ENCODE measurements at regions of chr10 and their contacts with region 1.

Region 1: DNA sequence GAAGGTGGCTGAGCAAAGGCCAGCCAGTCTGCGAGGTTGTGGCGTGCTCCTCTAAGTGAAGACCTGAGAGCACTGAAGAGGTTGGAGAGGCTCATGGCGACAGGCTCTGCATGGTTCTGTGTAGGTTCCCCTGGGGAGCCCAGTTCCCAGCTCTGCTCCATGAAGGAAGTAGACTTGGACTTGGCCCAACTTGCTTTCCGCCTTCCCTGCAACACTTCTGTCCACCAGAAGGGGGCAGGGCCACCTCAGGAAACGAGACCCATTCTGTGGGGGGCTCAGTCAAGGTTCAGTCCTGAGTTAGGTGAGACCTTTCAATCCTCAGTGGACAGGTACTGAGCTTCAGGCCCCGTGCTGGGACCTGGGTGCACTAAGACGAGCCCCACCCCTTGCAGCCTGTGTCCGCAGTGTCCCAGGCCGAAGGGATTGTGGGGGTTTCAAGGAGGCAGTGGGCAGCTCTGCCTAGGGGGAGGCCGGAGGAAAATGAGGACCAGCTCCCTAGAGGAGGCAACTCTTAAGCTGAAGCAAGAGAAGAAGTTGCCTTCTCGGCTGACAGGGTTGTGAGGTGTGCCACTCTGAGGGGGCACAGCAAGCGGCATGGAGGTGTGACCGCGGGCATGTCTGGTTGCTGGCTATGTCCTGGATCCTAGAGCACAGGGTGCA is 15.0 kb upstream of the PCBD1 start:
- DNase-seq: peak; percentile 53
- H3K4me3 Mint-ChIP-seq: no peak overlapping the region
- H3K27ac Mint-ChIP-seq: no peak overlapping the region
- H3K4me1 Mint-ChIP-seq: no peaks in the 10 kb centered on the region
- H3K27me3 Mint-ChIP-seq: peaks cover 51% of the 10 kb centered on the region
- CTCF ChIP-seq: peak; percentile 81

Region 2: GRCh38 chr10:70308121-70309060 is 595.0 kb before region 1 on chr10:
- CTCF ChIA-PET with region 1: no interaction called
- POLR2A ChIA-PET with region 1: no interaction called
- intact Hi-C with region 1: no loop called
- DNase-seq: no peak
- H3K4me3 Mint-ChIP-seq: no peak overlapping the region
- H3K27ac Mint-ChIP-seq: no peak overlapping the region
- H3K4me1 Mint-ChIP-seq: no peaks in the 10 kb centered on the region
- H3K27me3 Mint-ChIP-seq: no peaks in the 10 kb centered on the region
- CTCF ChIP-seq: no peak

Region 3: DNA sequence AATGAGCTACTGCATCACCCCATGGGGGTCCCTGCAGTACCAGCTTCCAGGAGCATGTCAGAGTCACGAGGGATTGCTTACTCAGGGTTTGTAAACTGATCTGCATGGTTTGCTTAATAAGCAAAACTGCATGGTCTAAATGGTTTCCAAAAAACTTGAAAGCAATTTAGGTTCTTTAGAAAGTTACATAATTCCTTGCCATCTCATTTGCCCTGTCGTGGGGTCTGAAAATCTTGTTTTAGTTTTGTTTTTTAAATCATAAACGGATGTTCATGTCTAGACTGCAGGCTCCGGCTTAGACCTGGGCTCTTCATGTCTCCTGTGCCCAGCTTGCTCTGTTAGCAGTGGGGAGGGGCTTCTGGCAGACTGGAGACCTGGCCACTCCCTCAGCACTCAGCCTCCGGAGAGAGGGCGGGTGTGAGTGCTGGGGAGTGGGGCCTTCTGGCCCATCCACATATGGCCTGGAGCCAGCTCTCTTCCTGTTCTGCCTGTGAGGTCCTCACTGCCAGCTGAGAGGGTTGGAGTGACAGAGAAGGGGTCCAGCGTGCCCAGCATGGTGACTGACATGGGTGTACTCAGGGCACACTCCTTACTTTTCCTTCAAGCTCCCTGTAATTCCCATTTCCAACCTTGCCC is 318.4 kb before region 1 on chr10:
- CTCF ChIA-PET with region 1: no interaction called
- POLR2A ChIA-PET with region 1: no interaction called
- intact Hi-C with region 1: no loop called
- DNase-seq: no peak
- H3K4me3 Mint-ChIP-seq: no peak overlapping the region
- H3K27ac Mint-ChIP-seq: no peak overlapping the region
- H3K4me1 Mint-ChIP-seq: peaks cover 3% of the 10 kb centered on the region
- H3K27me3 Mint-ChIP-seq: peaks cover 33% of the 10 kb centered on the region
- CTCF ChIP-seq: no peak

Region 4: DNA sequence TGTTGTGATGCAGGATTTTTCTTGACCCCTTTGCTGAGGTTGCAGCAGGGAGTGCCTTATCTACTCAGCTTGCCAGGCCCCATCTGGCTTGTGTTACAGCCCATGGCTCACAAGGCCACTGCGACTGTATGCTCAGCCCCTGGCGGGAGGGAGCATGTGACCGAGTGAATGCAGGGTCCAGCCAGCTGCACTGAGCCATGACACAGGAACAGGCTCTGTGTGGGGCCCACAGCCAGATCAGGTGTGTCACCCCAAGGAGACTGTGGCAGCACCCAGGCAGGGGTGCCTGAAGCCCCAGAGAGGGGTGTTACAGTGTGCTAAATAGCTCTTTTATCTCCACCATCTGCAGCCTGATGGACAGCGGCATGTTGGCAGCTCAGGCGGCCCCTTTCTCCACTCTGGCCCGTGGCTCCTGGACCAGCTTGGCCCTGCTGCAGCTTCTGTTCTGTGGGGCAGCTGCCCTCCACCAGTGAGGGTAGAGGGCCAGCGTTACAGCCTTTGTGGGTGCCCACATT is 12.4 kb before region 1 on chr10:
- CTCF ChIA-PET with region 1: interaction called, 20 read pairs
- POLR2A ChIA-PET with region 1: no interaction called
- intact Hi-C with region 1: no loop called
- DNase-seq: no peak
- H3K4me3 Mint-ChIP-seq: no peak overlapping the region
- H3K27ac Mint-ChIP-seq: no peak overlapping the region
- H3K4me1 Mint-ChIP-seq: peaks cover 12% of the 10 kb centered on the region
- H3K27me3 Mint-ChIP-seq: no peaks in the 10 kb centered on the region
- CTCF ChIP-seq: no peak

Region 5: DNA sequence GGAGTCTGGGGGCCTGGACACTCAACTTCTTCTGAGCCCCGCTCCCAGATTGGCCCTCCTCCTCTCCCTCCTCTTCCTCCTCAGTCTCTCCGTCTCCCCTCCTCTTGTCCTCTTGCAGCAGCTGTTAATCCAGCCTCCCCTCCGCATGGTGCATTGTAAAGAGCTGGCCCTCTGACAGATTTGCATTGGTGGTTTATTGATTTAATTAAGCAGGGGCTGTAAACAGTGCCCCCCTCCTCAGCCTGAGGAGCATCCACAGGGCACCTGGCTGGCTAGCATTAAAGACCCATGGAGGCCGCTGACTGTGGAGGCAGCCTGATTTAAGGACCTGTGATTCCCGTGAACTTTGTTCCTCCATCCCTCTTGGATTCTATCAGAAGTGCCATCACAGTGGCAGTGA is 13.8 kb after region 1 on chr10:
- CTCF ChIA-PET with region 1: interaction called, 72 read pairs
- POLR2A ChIA-PET with region 1: no interaction called
- intact Hi-C with region 1: no loop called
- DNase-seq: no peak
- H3K4me3 Mint-ChIP-seq: no peak overlapping the region
- H3K27ac Mint-ChIP-seq: no peak overlapping the region
- H3K4me1 Mint-ChIP-seq: no peaks in the 10 kb centered on the region
- H3K27me3 Mint-ChIP-seq: peaks cover 89% of the 10 kb centered on the region
- CTCF ChIP-seq: no peak

Region 6: DNA sequence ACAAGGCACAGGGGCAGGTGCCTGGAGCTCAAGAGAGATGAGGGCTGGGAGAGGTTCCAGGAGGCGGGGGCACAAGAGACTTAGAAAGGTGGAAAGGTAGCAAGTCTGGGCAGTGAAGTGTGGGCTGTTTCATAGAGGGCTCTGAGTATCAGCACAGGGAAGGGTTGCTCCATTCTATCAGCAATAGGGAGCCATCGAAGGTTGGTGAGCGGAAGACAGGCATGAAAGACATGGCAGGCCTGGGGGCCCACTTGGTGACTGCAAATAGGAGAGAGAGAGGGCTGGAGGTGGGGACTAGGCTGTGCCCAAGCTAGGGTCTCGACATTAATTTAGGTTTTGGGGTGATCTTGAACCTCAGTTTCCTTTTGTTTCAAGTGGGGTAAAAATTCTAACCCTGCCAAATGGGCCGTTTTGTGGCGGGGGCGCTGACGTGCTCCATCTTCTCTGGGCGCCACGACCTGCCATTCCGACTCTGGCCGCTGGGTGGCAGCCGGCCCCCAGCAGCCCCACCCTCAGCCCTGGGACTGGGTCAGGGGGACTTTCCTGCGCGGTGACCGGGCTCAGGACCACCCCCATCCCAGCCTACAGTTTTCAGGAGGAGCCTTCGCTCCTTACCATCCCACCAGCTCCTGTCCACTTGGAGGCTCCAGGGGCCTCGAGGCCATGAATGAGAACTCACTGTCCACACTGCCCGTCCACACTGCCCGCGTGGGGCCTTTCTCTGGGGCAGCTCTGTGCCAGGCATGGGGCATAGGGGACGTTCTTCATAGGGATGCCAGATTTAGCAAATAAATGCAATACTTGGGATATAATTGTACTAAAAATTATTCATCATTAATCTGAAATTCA is 22.2 kb after region 1 on chr10:
- CTCF ChIA-PET with region 1: interaction called, 72 read pairs
- POLR2A ChIA-PET with region 1: no interaction called
- intact Hi-C with region 1: no loop called
- DNase-seq: peak; percentile 36
- H3K4me3 Mint-ChIP-seq: no peak overlapping the region
- H3K27ac Mint-ChIP-seq: no peak overlapping the region
- H3K4me1 Mint-ChIP-seq: peaks cover 7% of the 10 kb centered on the region
- H3K27me3 Mint-ChIP-seq: peaks cover 37% of the 10 kb centered on the region
- CTCF ChIP-seq: peak; percentile 94

Region 7: GRCh38 chr10:71015674-71016073 is 112.3 kb after region 1 on chr10:
- CTCF ChIA-PET with region 1: no interaction called
- POLR2A ChIA-PET with region 1: no interaction called
- intact Hi-C with region 1: no loop called
- DNase-seq: no peak
- H3K4me3 Mint-ChIP-seq: no peak overlapping the region
- H3K27ac Mint-ChIP-seq: no peak overlapping the region
- H3K4me1 Mint-ChIP-seq: no peaks in the 10 kb centered on the region
- H3K27me3 Mint-ChIP-seq: peaks cover 69% of the 10 kb centered on the region
- CTCF ChIP-seq: no peak

Region 8: GRCh38 chr10:71103961-71104360 is 200.6 kb after region 1 on chr10:
- CTCF ChIA-PET with region 1: no interaction called
- POLR2A ChIA-PET with region 1: no interaction called
- intact Hi-C with region 1: no loop called
- DNase-seq: no peak
- H3K4me3 Mint-ChIP-seq: no peak overlapping the region
- H3K27ac Mint-ChIP-seq: no peak overlapping the region
- H3K4me1 Mint-ChIP-seq: no peaks in the 10 kb centered on the region
- H3K27me3 Mint-ChIP-seq: peaks cover 55% of the 10 kb centered on the region
- CTCF ChIP-seq: no peak

Region 9: GRCh38 chr10:71285180-71285545 is 381.8 kb after region 1 on chr10:
- CTCF ChIA-PET with region 1: interaction called, 22 read pairs
- POLR2A ChIA-PET with region 1: no interaction called
- intact Hi-C with region 1: no loop called
- DNase-seq: peak; percentile 55
- H3K4me3 Mint-ChIP-seq: no peak overlapping the region
- H3K27ac Mint-ChIP-seq: no peak overlapping the region
- H3K4me1 Mint-ChIP-seq: no peaks in the 10 kb centered on the region
- H3K27me3 Mint-ChIP-seq: no peaks in the 10 kb centered on the region
- CTCF ChIP-seq: peak; percentile 71

Region 10: GRCh38 chr10:71293446-71294084 is 390.2 kb after region 1 on chr10:
- CTCF ChIA-PET with region 1: interaction called, 15 read pairs
- POLR2A ChIA-PET with region 1: no interaction called
- intact Hi-C with region 1: no loop called
- DNase-seq: peak; percentile 32
- H3K4me3 Mint-ChIP-seq: no peak overlapping the region
- H3K27ac Mint-ChIP-seq: no peak overlapping the region
- H3K4me1 Mint-ChIP-seq: peaks cover 6% of the 10 kb centered on the region
- H3K27me3 Mint-ChIP-seq: no peaks in the 10 kb centered on the region
- CTCF ChIP-seq: no peak

Region 11: GRCh38 chr10:71302874-71303568 is 399.6 kb after region 1 on chr10:
- CTCF ChIA-PET with region 1: interaction called, 15 read pairs
- POLR2A ChIA-PET with region 1: no interaction called
- intact Hi-C with region 1: no loop called
- DNase-seq: peak; percentile 67
- H3K4me3 Mint-ChIP-seq: no peak overlapping the region
- H3K27ac Mint-ChIP-seq: no peak overlapping the region
- H3K4me1 Mint-ChIP-seq: no peaks in the 10 kb centered on the region
- H3K27me3 Mint-ChIP-seq: no peaks in the 10 kb centered on the region
- CTCF ChIP-seq: peak; percentile 30

Measured in MCF 10A (cell line).